ENCODE measurements at regions of chr14 and their contacts with region 1.

Region 1: GRCh38 chr14:73058224-73058921 is at the start of gene RBM25:
- DNase-seq: peak; percentile 97
- H3K4me3 Mint-ChIP-seq: no peak within 1 kb of the TSS
- H3K27ac Mint-ChIP-seq: no peak within 1 kb of the TSS
- H3K4me1 Mint-ChIP-seq: peaks cover 42% of the 10 kb centered on the region
- H3K27me3 Mint-ChIP-seq: no peaks in the 10 kb centered on the region
- total RNA-seq, gene RBM25: 86.3 to 93.6 TPM

Region 2: GRCh38 chr14:72926292-72927028 is 131.9 kb before region 1 on chr14 and contains the start of gene DCAF4:
- CTCF ChIA-PET with region 1: no interaction called
- intact Hi-C with region 1: loop called (anchors 1 kb)
- DNase-seq: peak; percentile 96
- H3K4me3 Mint-ChIP-seq: peak within 1 kb of the TSS; percentile 94
- H3K27ac Mint-ChIP-seq: peak within 1 kb of the TSS; percentile 56
- H3K4me1 Mint-ChIP-seq: peaks cover 6% of the 10 kb centered on the region
- H3K27me3 Mint-ChIP-seq: no peaks in the 10 kb centered on the region
- total RNA-seq, gene DCAF4: 13.3 to 16.4 TPM

Region 3: GRCh38 chr14:73136387-73137225 is 78.2 kb after region 1 on chr14 and contains the start of gene PSEN1:
- CTCF ChIA-PET with region 1: no interaction called
- intact Hi-C with region 1: loop called (anchors 1 kb)
- DNase-seq: peak; percentile 98
- H3K4me3 Mint-ChIP-seq: peak within 1 kb of the TSS; percentile 98
- H3K27ac Mint-ChIP-seq: peak within 1 kb of the TSS; percentile 97
- H3K4me1 Mint-ChIP-seq: peaks cover 26% of the 10 kb centered on the region
- H3K27me3 Mint-ChIP-seq: no peaks in the 10 kb centered on the region
- total RNA-seq, gene PSEN1: 24.5 to 26.0 TPM

Region 4: DNA sequence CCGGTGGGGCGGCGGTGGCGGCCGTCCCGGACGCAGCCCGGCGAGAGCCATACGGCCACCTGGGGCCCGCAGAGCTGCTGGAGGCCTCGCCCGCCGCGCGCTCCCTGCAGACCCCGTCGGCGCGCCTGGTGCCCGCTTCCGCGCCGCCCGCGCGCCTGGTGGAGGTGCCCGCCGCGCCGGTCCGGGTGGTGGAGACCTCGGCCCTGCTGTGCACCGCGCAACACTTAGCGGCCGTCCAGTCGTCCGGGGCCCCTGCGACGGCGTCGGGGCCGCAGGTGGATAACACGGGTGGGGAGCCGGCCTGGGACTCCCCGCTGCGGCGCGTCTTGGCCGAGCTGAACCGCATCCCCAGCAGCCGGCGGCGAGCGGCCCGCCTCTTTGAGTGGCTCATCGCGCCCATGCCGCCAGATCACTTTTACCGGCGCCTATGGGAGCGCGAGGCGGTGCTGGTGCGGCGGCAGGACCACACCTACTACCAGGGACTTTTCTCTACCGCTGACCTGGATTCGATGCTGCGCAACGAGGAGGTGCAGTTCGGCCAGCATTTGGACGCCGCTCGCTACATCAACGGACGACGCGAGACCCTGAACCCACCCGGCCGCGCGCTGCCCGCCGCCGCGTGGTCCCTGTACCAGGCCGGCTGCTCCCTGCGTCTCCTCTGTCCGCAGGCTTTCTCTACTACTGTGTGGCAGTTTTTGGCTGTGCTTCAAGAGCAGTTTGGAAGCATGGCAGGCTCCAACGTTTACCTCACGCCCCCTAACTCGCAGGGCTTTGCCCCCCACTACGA is 433.1 kb after region 1 on chr14:
- CTCF ChIA-PET with region 1: no interaction called
- intact Hi-C with region 1: loop called (anchors 1 kb)
- DNase-seq: peak; percentile 74
- H3K4me3 Mint-ChIP-seq: peak overlapping the region; percentile 78
- H3K27ac Mint-ChIP-seq: no peak overlapping the region
- H3K4me1 Mint-ChIP-seq: peaks cover 42% of the 10 kb centered on the region
- H3K27me3 Mint-ChIP-seq: no peaks in the 10 kb centered on the region

Region 5: GRCh38 chr14:73886449-73887317 is 828.3 kb after region 1 on chr14 and contains the start of gene ZNF410:
- CTCF ChIA-PET with region 1: no interaction called
- intact Hi-C with region 1: loop called (anchors 2 kb)
- DNase-seq: peak; percentile 95
- H3K4me3 Mint-ChIP-seq: peak within 1 kb of the TSS; percentile 88
- H3K27ac Mint-ChIP-seq: peak within 1 kb of the TSS; percentile 94
- H3K4me1 Mint-ChIP-seq: peaks cover 46% of the 10 kb centered on the region
- H3K27me3 Mint-ChIP-seq: no peaks in the 10 kb centered on the region
- total RNA-seq, gene ZNF410: 51.0 to 56.8 TPM

Region 6: DNA sequence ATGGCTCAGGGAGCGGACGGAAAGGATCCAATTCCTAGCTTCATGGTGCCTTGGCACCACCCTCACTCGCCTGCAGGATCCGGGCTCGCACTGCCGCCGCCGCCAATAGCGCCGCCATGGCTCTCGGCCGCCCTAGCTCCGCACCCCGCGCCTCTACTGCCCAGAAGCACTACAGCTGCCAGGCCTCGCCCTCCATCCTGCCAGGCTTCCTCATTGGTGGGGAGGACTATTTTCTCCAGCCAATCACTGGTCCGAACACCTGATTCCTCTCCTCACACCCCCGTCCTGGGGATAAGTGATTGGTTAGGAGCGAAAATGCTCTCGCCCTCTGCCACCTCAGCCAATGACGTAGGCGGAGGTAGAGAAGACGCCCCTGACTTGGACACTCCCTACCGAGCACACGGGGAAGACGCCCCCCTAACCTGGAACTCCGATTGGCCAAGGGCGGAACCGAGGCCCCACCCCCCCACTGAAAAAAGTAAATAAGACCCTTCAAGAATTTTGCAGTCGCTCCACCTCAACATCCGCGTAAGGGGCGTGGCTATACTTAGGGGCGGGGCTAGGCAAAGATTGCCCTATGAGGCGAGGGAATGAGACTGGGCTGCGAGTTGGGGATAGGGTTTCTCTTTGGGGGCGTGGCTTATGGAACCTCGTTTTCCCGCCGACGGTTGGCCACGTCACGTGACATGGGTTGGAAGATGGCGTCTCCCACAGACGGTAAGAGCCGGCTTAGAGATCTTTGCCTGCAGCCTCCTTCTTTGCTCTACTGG is 1026.1 kb after region 1 on chr14 and contains the starts of genes ALDH6A1 and LIN52:
- CTCF ChIA-PET with region 1: no interaction called
- intact Hi-C with region 1: loop called (anchors 10 kb)
- DNase-seq: peak; percentile 100
- H3K4me3 Mint-ChIP-seq: peak within 1 kb of the TSS; percentile 99
- H3K27ac Mint-ChIP-seq: peak within 1 kb of the TSS; percentile 95
- H3K4me1 Mint-ChIP-seq: peaks cover 38% of the 10 kb centered on the region
- H3K27me3 Mint-ChIP-seq: no peaks in the 10 kb centered on the region
- total RNA-seq, gene ALDH6A1: 24.0 to 25.3 TPM
- total RNA-seq, gene LIN52: 10.7 to 13.6 TPM

Measured in activated naive CD4-positive, alpha-beta T cell treated with anti-CD3 and anti-CD28 coated beads for 36 hours (primary cell).